Activated naive CD4-positive, alpha-beta T cell treated with anti-CD3 and anti-CD28 coated beads for 36 hours (primary cell): ENCODE measurements at regions of chr3 and their contacts with region 1.

Region 1: GRCh38 chr3:129824926-129825541 is 68.5 kb downstream of the TMCC1 start:
- DNase-seq: peak; percentile 63
- H3K4me3 Mint-ChIP-seq: no peak overlapping the region
- H3K27ac Mint-ChIP-seq: no peak overlapping the region
- H3K4me1 Mint-ChIP-seq: peaks cover 19% of the 10 kb centered on the region
- H3K27me3 Mint-ChIP-seq: no peaks in the 10 kb centered on the region

Region 2: GRCh38 chr3:129120254-129121004 is 704.6 kb before region 1 on chr3:
- CTCF ChIA-PET with region 1: no interaction called
- intact Hi-C with region 1: no loop called
- DNase-seq: peak; percentile 98
- H3K4me3 Mint-ChIP-seq: peak overlapping the region; percentile 94
- H3K27ac Mint-ChIP-seq: peak overlapping the region; percentile 99
- H3K4me1 Mint-ChIP-seq: peaks cover 46% of the 10 kb centered on the region
- H3K27me3 Mint-ChIP-seq: no peaks in the 10 kb centered on the region

Region 3: DNA sequence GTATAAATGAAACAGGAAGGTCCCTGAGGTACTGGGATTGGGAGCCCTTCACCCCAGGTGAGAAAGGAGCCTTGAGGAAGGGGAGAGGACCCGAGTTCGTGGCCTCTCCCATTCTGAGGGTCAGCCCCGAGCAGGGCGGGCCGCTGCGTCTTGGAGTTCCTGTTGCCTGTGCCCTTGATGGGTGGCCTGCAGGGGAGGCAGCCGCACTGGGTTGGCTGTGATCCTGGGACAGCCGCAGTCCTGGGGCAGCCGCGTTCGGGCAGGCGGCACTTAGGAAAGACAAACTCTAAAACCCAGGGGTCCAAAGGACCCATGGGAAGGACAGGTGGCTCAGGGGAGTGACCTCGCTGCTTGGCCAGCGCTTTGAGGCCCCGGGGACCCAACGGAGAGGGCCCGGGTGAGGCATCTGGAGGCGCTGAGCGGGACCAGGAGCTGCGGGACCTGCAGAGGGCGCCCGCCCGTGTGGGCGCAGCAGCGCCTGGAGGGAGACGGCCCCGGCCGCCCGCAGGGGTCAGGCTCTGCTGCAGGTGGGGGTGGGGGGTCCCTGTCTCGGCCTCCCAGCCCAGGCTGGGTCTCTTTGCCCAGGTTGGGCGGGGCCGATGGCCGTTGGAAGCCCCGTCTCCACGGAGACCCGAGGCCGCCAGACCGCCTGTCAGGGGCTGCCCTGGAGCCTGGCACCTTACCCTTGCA is 481.2 kb before region 1 on chr3:
- CTCF ChIA-PET with region 1: no interaction called
- intact Hi-C with region 1: loop called (anchors 5 kb)
- DNase-seq: peak; percentile 44
- H3K4me3 Mint-ChIP-seq: peak overlapping the region; percentile 34
- H3K27ac Mint-ChIP-seq: no peak overlapping the region
- H3K4me1 Mint-ChIP-seq: peaks cover 8% of the 10 kb centered on the region
- H3K27me3 Mint-ChIP-seq: peaks cover 24% of the 10 kb centered on the region

Region 4: DNA sequence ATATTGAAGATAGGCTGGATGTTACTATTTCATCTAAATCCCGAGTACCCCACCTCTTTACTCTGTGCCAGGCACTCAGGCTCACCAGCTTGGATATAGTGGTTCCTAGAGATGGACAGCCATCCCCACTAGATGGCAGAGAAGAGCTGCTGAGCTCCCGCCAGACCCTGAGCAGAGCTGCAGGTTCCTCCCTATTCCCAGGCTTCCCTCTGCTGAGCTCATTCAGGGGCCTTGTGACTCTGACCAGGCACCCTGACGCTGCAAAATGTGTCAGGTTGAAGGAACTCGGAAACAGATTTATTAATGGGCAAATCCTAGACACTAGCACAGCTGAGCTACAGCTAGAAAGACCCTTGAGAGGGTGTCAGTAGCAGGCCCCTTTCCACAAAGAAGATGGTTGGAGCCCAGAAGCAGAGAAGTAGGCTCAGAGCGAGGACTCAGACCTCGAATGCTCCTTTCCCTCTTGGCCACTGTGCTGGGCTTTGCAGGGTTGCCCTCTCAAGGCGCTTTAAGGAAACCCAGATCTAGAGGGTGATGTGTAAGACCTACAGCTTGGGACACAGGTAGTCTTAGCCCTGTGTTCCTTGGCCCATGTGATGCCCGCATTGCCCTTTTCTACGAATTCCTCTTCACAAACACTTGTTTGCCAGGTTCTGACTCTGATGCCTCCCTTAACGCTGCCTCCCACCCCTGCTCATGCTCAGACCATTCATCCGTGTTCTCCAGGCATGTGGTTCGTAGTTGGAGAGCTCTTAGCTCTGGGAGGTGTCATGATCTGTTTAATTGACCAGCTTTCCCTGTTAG is 334.6 kb before region 1 on chr3:
- CTCF ChIA-PET with region 1: interaction called, 7 read pairs
- intact Hi-C with region 1: loop called (anchors 1 kb)
- DNase-seq: peak; percentile 67
- H3K4me3 Mint-ChIP-seq: no peak overlapping the region
- H3K27ac Mint-ChIP-seq: no peak overlapping the region
- H3K4me1 Mint-ChIP-seq: no peaks in the 10 kb centered on the region
- H3K27me3 Mint-ChIP-seq: no peaks in the 10 kb centered on the region

Region 5: DNA sequence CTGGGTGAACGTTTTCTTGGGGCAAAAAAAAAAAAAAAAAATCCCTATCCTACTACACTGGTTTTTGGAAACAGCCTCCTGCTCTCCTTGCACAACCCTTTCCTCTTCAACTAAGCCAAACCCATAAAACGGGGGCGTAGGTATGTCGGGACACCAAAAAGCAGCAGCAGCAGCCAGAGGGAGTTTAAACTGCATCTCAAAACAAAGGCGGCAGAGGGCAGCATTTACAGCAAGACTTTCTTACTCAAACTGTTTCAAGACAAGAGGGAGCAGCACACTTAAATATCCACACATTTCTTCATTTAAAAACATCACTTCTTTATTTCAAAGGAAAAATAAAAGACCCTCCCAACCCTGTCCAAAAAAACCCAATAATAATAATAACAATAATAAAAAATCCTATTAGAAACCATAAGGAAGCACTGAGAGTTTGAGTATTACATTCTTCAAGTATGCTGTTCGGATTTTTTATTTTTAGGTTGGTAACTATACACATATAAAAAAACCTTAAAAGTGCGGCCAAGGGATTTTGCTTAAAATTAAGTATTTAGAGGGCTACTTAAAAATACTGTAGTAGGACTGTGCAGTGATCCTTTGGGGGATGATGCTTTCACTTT is 174.7 kb before region 1 on chr3:
- CTCF ChIA-PET with region 1: interaction called, 22 read pairs
- intact Hi-C with region 1: loop called (anchors 1 kb)
- DNase-seq: peak; percentile 83
- H3K4me3 Mint-ChIP-seq: no peak overlapping the region
- H3K27ac Mint-ChIP-seq: no peak overlapping the region
- H3K4me1 Mint-ChIP-seq: peaks cover 1% of the 10 kb centered on the region
- H3K27me3 Mint-ChIP-seq: no peaks in the 10 kb centered on the region

Region 6: DNA sequence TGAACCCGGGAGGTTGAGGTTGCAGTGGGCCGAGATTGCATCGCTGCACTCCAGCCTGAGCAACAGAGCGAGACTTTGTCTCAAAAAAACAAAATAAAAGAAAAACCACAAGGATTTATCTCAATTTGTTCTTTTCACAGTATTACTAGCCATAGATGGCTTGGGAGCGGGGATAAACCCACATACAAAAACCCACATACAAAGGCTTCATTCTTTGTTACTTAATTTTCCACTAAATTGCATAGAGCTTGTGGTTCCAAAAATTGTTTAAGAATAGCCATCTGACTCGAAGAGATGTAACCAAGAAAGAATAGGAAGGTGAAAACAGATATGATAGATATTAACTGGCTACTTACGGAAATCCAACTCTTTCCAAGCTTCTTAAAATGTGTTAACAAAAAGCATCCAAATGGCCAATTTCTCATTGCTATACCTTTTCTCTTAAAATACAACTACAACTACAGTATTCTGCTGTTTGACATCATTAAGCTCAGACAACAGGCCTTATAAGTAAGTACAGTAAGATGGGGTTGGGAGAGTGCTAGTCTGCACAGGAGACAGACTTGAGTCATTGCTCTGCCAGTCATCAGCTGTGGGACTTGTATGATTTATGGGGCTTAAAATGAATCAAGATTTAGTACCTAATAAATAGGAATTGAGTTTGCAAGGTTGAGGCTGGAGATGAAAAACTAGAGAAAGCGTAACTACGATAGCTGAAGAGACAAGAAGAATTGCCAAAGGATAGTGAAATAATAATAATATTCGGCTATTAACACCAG is 121.9 kb before region 1 on chr3:
- CTCF ChIA-PET with region 1: no interaction called
- intact Hi-C with region 1: no loop called
- DNase-seq: no peak
- H3K4me3 Mint-ChIP-seq: no peak overlapping the region
- H3K27ac Mint-ChIP-seq: no peak overlapping the region
- H3K4me1 Mint-ChIP-seq: peaks cover 14% of the 10 kb centered on the region
- H3K27me3 Mint-ChIP-seq: no peaks in the 10 kb centered on the region

Region 7: GRCh38 chr3:129794311-129795185 is 30.5 kb before region 1 on chr3:
- CTCF ChIA-PET with region 1: no interaction called
- intact Hi-C with region 1: no loop called
- DNase-seq: peak; percentile 36
- H3K4me3 Mint-ChIP-seq: no peak overlapping the region
- H3K27ac Mint-ChIP-seq: no peak overlapping the region
- H3K4me1 Mint-ChIP-seq: peaks cover 21% of the 10 kb centered on the region
- H3K27me3 Mint-ChIP-seq: no peaks in the 10 kb centered on the region

Region 8: GRCh38 chr3:130014526-130014925 is 189.5 kb after region 1 on chr3:
- CTCF ChIA-PET with region 1: no interaction called
- intact Hi-C with region 1: loop called (anchors 10 kb)
- DNase-seq: no peak
- H3K4me3 Mint-ChIP-seq: no peak overlapping the region
- H3K27ac Mint-ChIP-seq: no peak overlapping the region
- H3K4me1 Mint-ChIP-seq: no peaks in the 10 kb centered on the region
- H3K27me3 Mint-ChIP-seq: no peaks in the 10 kb centered on the region

Region 9: DNA sequence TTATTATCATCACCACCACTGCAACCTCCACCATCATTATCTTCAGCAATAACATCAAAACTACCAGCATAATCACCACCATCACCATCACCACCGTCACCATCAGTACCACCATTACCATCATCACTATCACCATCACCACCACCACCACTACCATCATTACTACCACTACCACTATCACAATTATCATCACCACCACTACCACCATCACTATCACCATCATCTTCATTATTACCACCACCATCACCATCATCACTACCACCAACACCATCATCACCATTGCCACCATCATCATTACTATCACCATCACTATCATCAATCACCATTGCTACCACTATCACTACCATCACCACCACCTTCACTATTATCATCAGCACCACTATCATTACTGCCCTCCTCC is 411.4 kb after region 1 on chr3:
- CTCF ChIA-PET with region 1: no interaction called
- intact Hi-C with region 1: no loop called
- DNase-seq: no peak
- H3K4me3 Mint-ChIP-seq: no peak overlapping the region
- H3K27ac Mint-ChIP-seq: no peak overlapping the region
- H3K4me1 Mint-ChIP-seq: no peaks in the 10 kb centered on the region
- H3K27me3 Mint-ChIP-seq: peaks cover 6% of the 10 kb centered on the region